Left ventricle myocardium superior (tissue), 1 donor: ENCODE measurements at regions of chr6 and their contacts with region 1.

Region 1: GRCh38 chr6:43334466-43335095 is 26.0 kb upstream of the CRIP3 start:
- DNase-seq: no peak
- ATAC-seq: peak; percentile 36

Region 2: DNA sequence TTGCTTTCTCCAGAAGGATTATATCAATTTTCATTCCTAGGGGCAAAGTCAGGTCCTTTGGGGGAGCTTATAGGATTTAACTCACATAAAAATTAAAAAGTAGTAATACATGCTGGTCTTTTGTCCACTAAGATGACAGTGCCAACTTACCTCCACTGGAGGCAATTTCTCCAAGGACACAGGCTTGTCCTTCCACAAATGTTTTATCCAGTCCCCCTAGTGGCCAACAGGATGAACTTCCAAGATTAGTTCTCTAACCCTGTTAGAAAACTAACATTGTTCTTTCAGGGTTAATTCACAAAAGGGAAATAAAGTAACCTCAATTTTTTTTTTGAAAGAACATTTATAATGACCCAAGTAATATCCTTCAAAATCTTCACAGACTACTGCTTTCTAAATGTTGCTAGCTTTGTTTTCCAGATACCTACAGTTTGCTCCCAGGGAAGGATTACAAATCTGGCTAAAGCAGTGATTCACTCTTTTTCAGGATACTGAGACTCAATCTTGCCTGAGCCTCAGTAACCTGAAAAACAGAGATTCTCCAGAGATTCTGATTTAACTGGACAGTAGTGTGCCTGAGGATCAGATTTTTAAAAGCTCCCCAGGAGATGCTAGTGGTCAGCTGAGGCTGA is 802.4 kb before region 1 on chr6:
- intact Hi-C with region 1: no loop called
- DNase-seq: no peak
- ATAC-seq: peak; percentile 54

Region 3: GRCh38 chr6:43263314-43264178 is 71.0 kb before region 1 on chr6:
- intact Hi-C with region 1: loop called (anchors 5 kb)
- DNase-seq: peak; percentile 81
- ATAC-seq: peak; percentile 79

Region 4: DNA sequence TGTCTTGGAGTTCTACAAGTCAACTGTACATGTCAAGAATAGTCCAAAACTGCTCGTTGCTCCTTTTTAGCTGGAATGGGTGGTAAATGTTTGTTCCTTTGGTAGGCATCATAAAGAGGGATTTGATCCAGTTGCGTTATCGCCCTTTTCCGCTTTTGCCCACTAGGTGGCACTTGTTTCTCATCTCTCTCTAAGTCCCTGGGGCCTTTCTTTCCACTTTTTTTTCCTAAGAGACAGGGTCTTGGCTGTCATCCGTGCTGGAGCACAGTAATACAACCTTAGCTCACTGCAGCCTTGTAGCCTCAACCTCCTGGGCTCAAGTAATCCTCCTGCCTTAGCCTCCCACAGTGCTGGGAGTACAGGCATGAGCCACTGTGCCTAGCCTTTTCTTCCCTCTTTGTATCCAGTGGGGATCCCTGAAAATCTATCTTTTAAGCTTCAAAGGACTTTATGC is 273.8 kb after region 1 on chr6:
- intact Hi-C with region 1: no loop called
- DNase-seq: peak; percentile 54
- ATAC-seq: peak; percentile 61